Activated naive CD4-positive, alpha-beta T cell treated with anti-CD3 and anti-CD28 coated beads for 36 hours (primary cell): ENCODE measurements at regions of chr10 and their contacts with region 1.

Region 1: GRCh38 chr10:11586170-11586569 is 25.3 kb downstream of the USP6NL start:
- DNase-seq: no peak
- H3K4me3 Mint-ChIP-seq: no peak overlapping the region
- H3K27ac Mint-ChIP-seq: no peak overlapping the region
- H3K4me1 Mint-ChIP-seq: peaks cover 27% of the 10 kb centered on the region
- H3K27me3 Mint-ChIP-seq: no peaks in the 10 kb centered on the region

Region 2: GRCh38 chr10:11601670-11602069 is 15.5 kb after region 1 on chr10:
- CTCF ChIA-PET with region 1: no interaction called
- intact Hi-C with region 1: loop called (anchors 1 kb)
- DNase-seq: no peak
- H3K4me3 Mint-ChIP-seq: no peak overlapping the region
- H3K27ac Mint-ChIP-seq: no peak overlapping the region
- H3K4me1 Mint-ChIP-seq: peaks cover 55% of the 10 kb centered on the region
- H3K27me3 Mint-ChIP-seq: no peaks in the 10 kb centered on the region

Region 3: GRCh38 chr10:11730779-11731178 is 144.6 kb after region 1 on chr10:
- CTCF ChIA-PET with region 1: no interaction called
- intact Hi-C with region 1: no loop called
- DNase-seq: no peak
- H3K4me3 Mint-ChIP-seq: no peak overlapping the region
- H3K27ac Mint-ChIP-seq: no peak overlapping the region
- H3K4me1 Mint-ChIP-seq: no peaks in the 10 kb centered on the region
- H3K27me3 Mint-ChIP-seq: no peaks in the 10 kb centered on the region